Heart right ventricle (tissue), 16 donors: ENCODE measurements at regions of chr6 and their contacts with region 1.

Region 1: GRCh38 chr6:159789377-159790148 is at the start of gene TCP1:
- DNase-seq: peak; percentile 99 to 100
- ATAC-seq: peak; percentile 91 to 97 (median 94)
- H3K4me3 ChIP-seq: peak within 1 kb of the TSS; percentile 92 to 99 (median 98)
- H3K27ac ChIP-seq: peak within 1 kb of the TSS; percentile 81 to 99 (median 94)
- H3K4me1 ChIP-seq: peaks cover 12 to 63% (median 45%) of the 10 kb centered on the region in 9 donors
- H3K27me3 ChIP-seq: no peaks in the 10 kb centered on the region
- CTCF ChIP-seq: no peak
- total RNA-seq, gene TCP1: 124 to 176 (median 139) TPM

Region 2: DNA sequence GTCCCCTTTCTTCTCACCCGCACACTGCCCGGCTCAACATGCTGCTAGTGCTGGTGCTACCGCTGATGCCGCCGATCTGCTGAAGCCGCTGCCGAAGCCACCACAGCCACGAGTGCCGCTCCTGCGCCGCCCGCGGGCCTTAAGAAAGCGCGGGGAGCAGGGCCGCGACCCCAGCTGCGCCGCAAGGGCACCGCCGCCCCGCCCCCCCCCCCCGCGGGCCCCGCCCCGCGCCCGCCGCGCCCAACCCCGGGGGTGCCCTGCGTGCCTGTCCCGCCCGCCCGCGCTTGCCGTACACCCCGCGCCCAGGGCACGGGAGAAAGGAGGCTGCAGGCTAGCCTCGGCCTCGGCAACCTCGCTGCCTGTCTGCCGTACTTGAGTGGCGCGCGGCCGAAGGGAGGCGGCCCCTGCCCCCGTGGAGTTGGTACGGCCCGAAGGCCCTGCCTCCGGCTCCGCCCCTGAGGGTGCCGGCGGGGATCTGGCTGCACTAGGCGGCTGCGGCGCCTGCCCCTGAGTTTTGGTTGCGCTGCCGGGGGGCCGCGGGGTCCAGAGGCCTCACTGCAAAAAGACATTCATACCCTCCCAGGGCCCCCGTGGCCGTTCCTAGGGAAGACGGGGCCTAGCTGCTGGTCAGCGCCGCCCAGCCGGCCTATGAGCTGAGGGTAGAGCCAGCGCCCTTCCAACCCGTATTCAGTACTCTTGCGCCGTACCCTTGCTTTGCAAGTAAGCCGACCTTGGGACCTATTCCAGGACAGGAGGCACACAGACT is 96.3 kb before region 1 on chr6 and contains the start of gene SOD2:
- intact Hi-C with region 1: loop called in 6 of 10 experiments (anchors 2 to 5 kb)
- DNase-seq: peak; percentile 84 to 87
- ATAC-seq: peak; percentile 89 to 93 (median 92)
- H3K4me3 ChIP-seq: peak within 1 kb of the TSS; percentile 81 to 99 (median 96)
- H3K27ac ChIP-seq: peak within 1 kb of the TSS; percentile 95 to 99 (median 98)
- H3K4me1 ChIP-seq: peaks cover 2 to 62% (median 53%) of the 10 kb centered on the region in 9 donors
- H3K27me3 ChIP-seq: no peaks in the 10 kb centered on the region
- CTCF ChIP-seq: no peak
- total RNA-seq, gene SOD2: 720 to 1,111 (median 848) TPM

Region 3: DNA sequence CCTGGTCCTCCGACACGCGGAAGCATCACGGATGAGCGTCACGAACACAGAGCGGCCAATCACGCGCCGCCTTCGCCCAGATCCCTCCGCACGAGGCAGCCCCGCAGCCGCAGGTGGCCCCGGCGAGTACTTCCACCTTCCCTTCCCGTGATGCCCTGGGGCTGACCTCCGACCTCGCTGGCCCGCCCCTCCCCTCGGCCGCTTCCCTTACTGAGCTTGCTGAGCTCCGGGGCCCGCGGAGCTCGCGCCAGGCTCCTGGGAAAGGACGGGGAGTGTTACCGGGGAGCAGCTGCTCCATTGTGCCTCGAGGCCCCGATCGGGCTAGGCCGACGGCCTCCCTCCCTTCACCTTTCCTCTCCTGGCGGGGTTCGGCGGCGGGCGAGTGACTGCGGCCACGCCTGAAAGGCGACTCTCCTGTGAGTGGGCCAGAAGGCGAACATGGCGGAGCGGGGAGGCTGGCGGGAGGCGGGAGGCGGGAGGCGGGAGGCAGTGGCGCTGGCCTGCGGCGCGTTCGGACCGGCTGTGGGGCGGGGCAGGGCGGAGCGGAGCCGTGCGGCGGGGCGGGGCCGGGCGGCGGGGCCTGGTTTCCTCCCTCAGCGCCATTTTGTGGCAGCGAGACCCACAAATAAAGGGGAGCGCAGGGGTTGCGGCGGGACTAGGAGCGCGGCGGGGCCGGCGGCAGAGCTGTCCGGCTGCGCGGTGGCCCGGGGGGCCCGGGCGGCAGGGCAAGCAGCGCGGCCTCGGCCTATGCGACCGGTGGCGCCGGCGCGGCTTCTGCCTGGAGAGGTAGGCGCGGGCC is 62.4 kb before region 1 on chr6 and contains the start of gene WTAP:
- intact Hi-C with region 1: loop called in 6 of 10 experiments (anchors 2 to 10 kb)
- DNase-seq: peak; percentile 94 to 95
- ATAC-seq: peak; percentile 96 to 98 (median 97)
- H3K4me3 ChIP-seq: peak within 1 kb of the TSS; percentile 64 to 96 (median 86)
- H3K27ac ChIP-seq: peak within 1 kb of the TSS; percentile 92 to 100 (median 99)
- H3K4me1 ChIP-seq: peaks cover 0 to 57% (median 51%) of the 10 kb centered on the region in 9 donors
- H3K27me3 ChIP-seq: no peaks in the 10 kb centered on the region
- CTCF ChIP-seq: no peak
- total RNA-seq, gene WTAP: 44.4 to 70.1 (median 47.2) TPM

Region 4: DNA sequence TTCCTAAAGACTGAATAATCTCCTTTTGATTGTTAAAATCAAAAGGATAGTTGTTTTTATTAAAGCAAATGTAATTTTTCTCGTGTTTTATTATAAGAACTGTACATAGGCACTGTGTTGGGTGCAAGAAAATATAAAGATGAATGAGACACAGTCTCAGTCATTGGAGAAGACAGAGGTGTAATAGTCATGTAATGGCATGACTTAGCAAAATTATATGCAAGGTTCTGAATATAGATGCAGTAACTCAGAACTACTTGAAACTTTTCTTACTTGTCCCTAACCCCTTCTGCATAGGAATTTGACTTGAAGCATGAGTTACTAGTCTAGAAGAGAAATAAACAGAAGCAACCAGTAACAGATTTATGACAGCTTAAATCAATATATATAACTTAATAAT is 47.4 kb before region 1 on chr6:
- intact Hi-C with region 1: loop called in 2 of 10 experiments (anchors 5 to 10 kb)
- DNase-seq: no peak
- ATAC-seq: no peak
- H3K4me3 ChIP-seq: no peak overlapping the region
- H3K27ac ChIP-seq: no peak overlapping the region
- H3K4me1 ChIP-seq: peaks cover 0 to 47% (median 22%) of the 10 kb centered on the region in 9 donors
- H3K27me3 ChIP-seq: no peaks in the 10 kb centered on the region
- CTCF ChIP-seq: no peak

Region 5: DNA sequence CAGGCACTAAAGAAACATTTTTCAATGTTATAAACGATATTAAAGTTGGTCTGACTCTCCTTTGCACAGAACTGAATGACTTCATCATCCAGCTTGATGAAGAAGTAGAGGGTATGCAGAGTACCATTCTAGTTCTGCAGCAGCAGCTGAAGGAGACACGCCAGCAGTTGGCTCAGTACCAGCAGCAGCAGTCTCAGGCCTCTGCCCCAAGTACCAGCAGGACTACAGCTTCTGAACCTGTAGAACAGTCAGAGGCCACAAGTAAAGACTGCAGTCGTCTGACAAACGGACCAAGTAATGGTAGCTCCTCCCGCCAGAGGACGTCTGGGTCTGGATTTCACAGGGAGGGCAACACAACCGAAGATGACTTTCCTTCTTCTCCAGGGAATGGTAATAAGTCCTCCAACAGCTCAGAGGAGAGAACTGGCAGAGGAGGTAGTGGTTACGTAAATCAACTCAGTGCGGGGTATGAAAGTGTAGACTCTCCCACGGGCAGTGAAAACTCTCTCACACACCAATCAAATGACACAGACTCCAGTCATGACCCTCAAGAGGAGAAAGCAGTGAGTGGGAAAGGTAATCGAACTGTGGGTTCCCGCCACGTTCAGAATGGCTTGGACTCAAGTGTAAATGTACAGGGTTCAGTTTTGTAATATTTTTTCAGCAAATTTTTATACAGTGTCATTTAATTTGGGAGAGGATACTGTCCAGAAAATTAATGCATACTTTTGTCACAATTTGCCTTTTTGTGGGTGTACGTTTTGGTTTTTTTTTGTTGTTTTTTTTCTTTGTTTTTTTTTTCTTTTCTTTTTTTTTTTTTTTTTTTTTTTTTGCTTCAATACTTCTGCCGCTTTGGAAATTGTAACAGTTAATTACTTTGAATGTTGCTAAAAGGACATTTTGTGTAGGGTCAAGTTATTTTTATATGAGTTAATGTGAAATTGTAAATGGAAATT is 34.3 kb before region 1 on chr6:
- intact Hi-C with region 1: loop called in 1 of 10 experiments (anchors 5 kb)
- DNase-seq: no peak
- ATAC-seq: peak in 5 of 8 donors; percentile 10 to 51 (median 44)
- H3K4me3 ChIP-seq: no peak overlapping the region
- H3K27ac ChIP-seq: no peak overlapping the region
- H3K4me1 ChIP-seq: peaks cover 0 to 7% (median 0%) of the 10 kb centered on the region in 9 donors
- H3K27me3 ChIP-seq: no peaks in the 10 kb centered on the region
- CTCF ChIP-seq: no peak

Region 6: GRCh38 chr6:159761873-159762680 is 27.5 kb before region 1 on chr6 and contains the start of gene ACAT2:
- intact Hi-C with region 1: loop called in 2 of 10 experiments (anchors 2 kb)
- DNase-seq: peak; percentile 94 to 97
- ATAC-seq: peak; percentile 98 to 100 (median 99)
- H3K4me3 ChIP-seq: peak within 1 kb of the TSS; percentile 82 to 100 (median 97)
- H3K27ac ChIP-seq: peak within 1 kb of the TSS; percentile 87 to 99 (median 97)
- H3K4me1 ChIP-seq: peaks cover 3 to 30% (median 19%) of the 10 kb centered on the region in 9 donors
- H3K27me3 ChIP-seq: no peaks in the 10 kb centered on the region
- CTCF ChIP-seq: peak in 3 of 9 donors; percentile 9 to 10 (median 10)
- total RNA-seq, gene ACAT2: 3.4 to 7.5 (median 5.8) TPM

Region 7: DNA sequence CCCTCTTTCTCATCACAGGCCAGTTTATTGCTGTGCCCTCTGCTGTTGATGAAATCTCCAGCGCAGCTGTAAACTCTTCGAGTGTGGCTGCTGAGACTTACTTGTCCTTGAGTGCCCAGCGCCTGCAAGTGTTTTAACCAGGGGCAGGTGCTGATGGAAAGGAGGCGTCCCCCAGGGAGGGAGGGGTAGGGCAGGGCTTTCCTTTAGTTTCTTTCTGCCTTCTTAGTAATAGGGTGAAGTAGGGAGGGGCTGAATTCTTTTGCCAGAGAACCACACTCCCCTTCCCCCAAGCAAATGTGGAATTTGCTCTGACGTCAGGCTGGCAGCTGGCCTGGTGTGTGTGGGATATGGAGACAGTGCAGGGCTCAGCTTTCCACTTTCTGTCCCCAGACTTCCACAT is 240.5 kb after region 1 on chr6:
- intact Hi-C with region 1: loop called in 1 of 10 experiments (anchors 10 kb)
- DNase-seq: peak; percentile 88 to 93
- ATAC-seq: peak; percentile 90 to 97 (median 95)
- H3K4me3 ChIP-seq: no peak overlapping the region
- H3K27ac ChIP-seq: peak overlapping the region in 9 of 10 donors; percentile 50 to 82 (median 70)
- H3K4me1 ChIP-seq: peaks cover 11 to 35% (median 20%) of the 10 kb centered on the region in 9 donors
- H3K27me3 ChIP-seq: no peaks in the 10 kb centered on the region
- CTCF ChIP-seq: peak in 3 of 9 donors; percentile 26 to 36 (median 31)